ENCODE measurements at regions of chr20 and their contacts with region 1.

Region 1: GRCh38 chr20:2752567-2753460 is 47.6 kb downstream of the CPXM1 start:
- DNase-seq: peak; percentile 59
- ATAC-seq: no peak

Region 2: GRCh38 chr20:1707588-1708449 is 1045.0 kb before region 1 on chr20:
- intact Hi-C with region 1: loop called (anchors 5 kb)
- DNase-seq: no peak
- ATAC-seq: no peak

Region 3: GRCh38 chr20:2206957-2207769 is 545.7 kb before region 1 on chr20:
- intact Hi-C with region 1: no loop called
- DNase-seq: peak; percentile 84
- ATAC-seq: peak; percentile 96

Region 4: GRCh38 chr20:2519115-2519809 is 233.6 kb before region 1 on chr20:
- intact Hi-C with region 1: no loop called
- DNase-seq: no peak
- ATAC-seq: no peak

Region 5: DNA sequence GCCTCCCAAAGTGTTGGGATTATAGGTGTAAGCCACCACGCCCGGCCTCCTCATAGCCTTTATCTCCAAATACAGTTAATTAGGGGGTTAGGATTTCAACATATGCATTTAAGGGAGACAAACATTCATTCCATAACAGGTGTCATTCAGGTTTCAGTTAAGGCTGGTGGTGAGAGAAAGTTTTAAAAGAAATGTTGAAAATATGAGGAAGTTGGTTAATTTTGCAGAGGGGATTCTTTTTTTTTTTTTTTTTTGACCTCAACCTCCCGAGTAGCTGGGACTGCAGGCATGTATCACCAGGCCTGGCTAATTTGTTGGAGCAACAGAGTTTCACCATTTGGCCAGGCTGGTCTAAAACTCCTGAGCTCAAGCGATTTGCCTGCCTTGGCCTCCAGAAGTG is 72.8 kb before region 1 on chr20:
- intact Hi-C with region 1: no loop called
- DNase-seq: no peak
- ATAC-seq: no peak

Measured in sciatic nerve (tissue), 2 donors.